ENCODE measurements at regions of chr6 and their contacts with region 1.

Region 1: DNA sequence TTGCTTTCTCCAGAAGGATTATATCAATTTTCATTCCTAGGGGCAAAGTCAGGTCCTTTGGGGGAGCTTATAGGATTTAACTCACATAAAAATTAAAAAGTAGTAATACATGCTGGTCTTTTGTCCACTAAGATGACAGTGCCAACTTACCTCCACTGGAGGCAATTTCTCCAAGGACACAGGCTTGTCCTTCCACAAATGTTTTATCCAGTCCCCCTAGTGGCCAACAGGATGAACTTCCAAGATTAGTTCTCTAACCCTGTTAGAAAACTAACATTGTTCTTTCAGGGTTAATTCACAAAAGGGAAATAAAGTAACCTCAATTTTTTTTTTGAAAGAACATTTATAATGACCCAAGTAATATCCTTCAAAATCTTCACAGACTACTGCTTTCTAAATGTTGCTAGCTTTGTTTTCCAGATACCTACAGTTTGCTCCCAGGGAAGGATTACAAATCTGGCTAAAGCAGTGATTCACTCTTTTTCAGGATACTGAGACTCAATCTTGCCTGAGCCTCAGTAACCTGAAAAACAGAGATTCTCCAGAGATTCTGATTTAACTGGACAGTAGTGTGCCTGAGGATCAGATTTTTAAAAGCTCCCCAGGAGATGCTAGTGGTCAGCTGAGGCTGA is 31.7 kb upstream of the UBR2 start:
- DNase-seq: peak; percentile 74
- H3K4me3 Mint-ChIP-seq: no peak overlapping the region
- H3K27ac Mint-ChIP-seq: no peak overlapping the region
- H3K4me1 Mint-ChIP-seq: no peaks in the 10 kb centered on the region
- H3K27me3 Mint-ChIP-seq: no peaks in the 10 kb centered on the region
- CTCF ChIP-seq: peak; percentile 79

Region 2: GRCh38 chr6:42260972-42261371 is 271.2 kb before region 1 on chr6:
- CTCF ChIA-PET with region 1: interaction called, 4 read pairs
- POLR2A ChIA-PET with region 1: no interaction called
- intact Hi-C with region 1: loop called (anchors 1 kb)
- DNase-seq: peak; percentile 26
- H3K4me3 Mint-ChIP-seq: no peak overlapping the region
- H3K27ac Mint-ChIP-seq: peak overlapping the region; percentile 70
- H3K4me1 Mint-ChIP-seq: peaks cover 9% of the 10 kb centered on the region
- H3K27me3 Mint-ChIP-seq: no peaks in the 10 kb centered on the region
- CTCF ChIP-seq: peak; percentile 70

Region 3: GRCh38 chr6:42366999-42367352 is 165.2 kb before region 1 on chr6:
- CTCF ChIA-PET with region 1: no interaction called
- POLR2A ChIA-PET with region 1: no interaction called
- intact Hi-C with region 1: no loop called
- DNase-seq: no peak
- H3K4me3 Mint-ChIP-seq: no peak overlapping the region
- H3K27ac Mint-ChIP-seq: no peak overlapping the region
- H3K4me1 Mint-ChIP-seq: peaks cover 32% of the 10 kb centered on the region
- H3K27me3 Mint-ChIP-seq: no peaks in the 10 kb centered on the region
- CTCF ChIP-seq: no peak

Region 4: GRCh38 chr6:42511803-42512422 is 20.2 kb before region 1 on chr6:
- CTCF ChIA-PET with region 1: interaction called, 13 read pairs
- POLR2A ChIA-PET with region 1: no interaction called
- intact Hi-C with region 1: no loop called
- DNase-seq: peak; percentile 36
- H3K4me3 Mint-ChIP-seq: no peak overlapping the region
- H3K27ac Mint-ChIP-seq: no peak overlapping the region
- H3K4me1 Mint-ChIP-seq: no peaks in the 10 kb centered on the region
- H3K27me3 Mint-ChIP-seq: no peaks in the 10 kb centered on the region
- CTCF ChIP-seq: no peak

Region 5: GRCh38 chr6:42520786-42521607 is 11.2 kb before region 1 on chr6:
- CTCF ChIA-PET with region 1: interaction called, 27 read pairs
- POLR2A ChIA-PET with region 1: interaction called, 3 read pairs
- intact Hi-C with region 1: no loop called
- DNase-seq: peak; percentile 23
- H3K4me3 Mint-ChIP-seq: no peak overlapping the region
- H3K27ac Mint-ChIP-seq: no peak overlapping the region
- H3K4me1 Mint-ChIP-seq: peaks cover 8% of the 10 kb centered on the region
- H3K27me3 Mint-ChIP-seq: no peaks in the 10 kb centered on the region
- CTCF ChIP-seq: no peak

Region 6: GRCh38 chr6:42563697-42564505 is 31.7 kb after region 1 on chr6 and contains the start of gene UBR2:
- CTCF ChIA-PET with region 1: no interaction called
- POLR2A ChIA-PET with region 1: no interaction called
- intact Hi-C with region 1: no loop called
- DNase-seq: peak; percentile 99
- H3K4me3 Mint-ChIP-seq: peak within 1 kb of the TSS; percentile 79
- H3K27ac Mint-ChIP-seq: peak within 1 kb of the TSS; percentile 81
- H3K4me1 Mint-ChIP-seq: peaks cover 18% of the 10 kb centered on the region
- H3K27me3 Mint-ChIP-seq: no peaks in the 10 kb centered on the region
- CTCF ChIP-seq: no peak
- total RNA-seq, gene UBR2: 20.1 and 23.2 TPM in 2 replicates

Region 7: DNA sequence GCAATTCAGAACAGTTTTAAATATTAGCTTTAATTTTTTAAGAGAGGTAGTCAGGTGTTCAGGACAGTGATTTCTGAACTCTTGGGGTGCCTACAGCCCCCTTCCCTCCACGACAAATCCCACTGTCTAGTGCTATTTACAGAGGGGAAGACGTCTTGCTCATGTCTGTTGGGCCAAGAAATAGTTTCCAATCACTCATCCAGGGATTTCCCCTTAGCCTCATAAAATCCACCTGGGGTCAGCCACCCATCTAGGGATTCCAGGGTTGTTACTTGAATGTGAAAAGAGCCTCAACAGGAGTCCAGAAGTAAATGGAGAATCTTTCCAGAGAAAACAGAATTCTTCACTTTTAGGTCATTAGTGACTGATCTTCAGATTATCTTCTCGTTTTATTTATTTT is 286.7 kb after region 1 on chr6:
- CTCF ChIA-PET with region 1: no interaction called
- POLR2A ChIA-PET with region 1: no interaction called
- intact Hi-C with region 1: no loop called
- DNase-seq: no peak
- H3K4me3 Mint-ChIP-seq: no peak overlapping the region
- H3K27ac Mint-ChIP-seq: no peak overlapping the region
- H3K4me1 Mint-ChIP-seq: peaks cover 10% of the 10 kb centered on the region
- H3K27me3 Mint-ChIP-seq: no peaks in the 10 kb centered on the region
- CTCF ChIP-seq: no peak